ENCODE measurements at regions of chr4 and their contacts with region 1.

Region 1: GRCh38 chr4:16205298-16206164 is 20.7 kb downstream of the TAPT1 start:
- DNase-seq: peak; percentile 24
- H3K4me3 ChIP-seq: no peak overlapping the region
- H3K27ac ChIP-seq: no peak overlapping the region
- H3K4me1 ChIP-seq: no peaks in the 10 kb centered on the region
- H3K27me3 ChIP-seq: no peaks in the 10 kb centered on the region
- CTCF ChIP-seq: peak; percentile 40 to 54
- POLR2A ChIP-seq: no peak

Region 2: DNA sequence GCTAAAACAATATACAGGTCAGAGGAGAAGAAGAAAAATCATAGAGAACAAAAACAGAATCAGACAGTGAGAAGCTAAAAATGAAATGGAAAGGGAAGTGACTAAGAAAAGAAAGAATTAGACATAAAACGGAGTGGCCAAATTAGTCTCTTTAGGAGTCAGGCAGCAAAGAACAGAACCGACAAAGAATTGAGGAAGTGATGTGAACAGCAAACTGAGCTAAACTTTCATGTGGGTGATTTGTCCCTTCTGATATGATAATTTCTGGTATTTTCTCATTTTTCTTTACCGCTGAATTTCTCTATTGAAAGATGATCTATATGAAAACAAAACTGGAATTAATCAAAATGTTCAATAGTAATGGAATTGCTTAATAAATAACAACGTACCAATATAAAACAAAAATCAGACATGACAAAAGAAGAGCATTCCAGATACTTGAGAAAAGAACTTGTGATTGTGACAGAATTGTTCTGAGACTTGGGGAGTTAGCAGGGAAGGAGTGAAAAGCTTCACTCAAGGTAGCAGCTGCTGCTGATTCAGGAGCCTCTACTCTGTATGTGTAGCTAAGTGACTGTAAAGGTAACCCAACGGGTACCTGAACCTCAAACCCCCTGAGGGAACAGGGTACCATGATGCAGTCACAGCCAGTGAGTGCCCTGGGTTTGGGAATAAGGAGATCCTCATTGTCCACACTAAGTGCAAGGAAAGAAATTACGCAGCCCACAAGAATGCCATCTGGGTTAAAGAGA is 11.9 kb after region 1 on chr4:
- CTCF ChIA-PET with region 1: interaction called, 23 read pairs
- POLR2A ChIA-PET with region 1: no interaction called
- dilution Hi-C with region 1: no loop called
- intact Hi-C with region 1: no loop called
- DNase-seq: no peak
- H3K4me3 ChIP-seq: no peak overlapping the region
- H3K27ac ChIP-seq: no peak overlapping the region
- H3K4me1 ChIP-seq: no peaks in the 10 kb centered on the region
- H3K27me3 ChIP-seq: no peaks in the 10 kb centered on the region
- CTCF ChIP-seq: no peak
- POLR2A ChIP-seq: no peak

Region 3: GRCh38 chr4:16225863-16226815 is 20.6 kb after region 1 on chr4 and contains the start of gene TAPT1:
- CTCF ChIA-PET with region 1: interaction called, 23 read pairs
- POLR2A ChIA-PET with region 1: no interaction called
- dilution Hi-C with region 1: no loop called
- intact Hi-C with region 1: loop called (anchors 1 kb)
- DNase-seq: peak; percentile 54
- H3K4me3 ChIP-seq: peak within 1 kb of the TSS; percentile 92 to 99 (median 99)
- H3K27ac ChIP-seq: peak within 1 kb of the TSS; percentile 60
- H3K4me1 ChIP-seq: peaks cover 15% of the 10 kb centered on the region
- H3K27me3 ChIP-seq: no peaks in the 10 kb centered on the region
- CTCF ChIP-seq: no peak
- POLR2A ChIP-seq: no peak
- total RNA-seq, gene TAPT1: 17.5 and 19.9 TPM in 2 replicates